Naive thymus-derived CD4-positive, alpha-beta T cell (primary cell): ENCODE measurements at regions of chr3 and their contacts with region 1.

Region 1: GRCh38 chr3:69051756-69052471 is at the start of gene TMF1:
- DNase-seq: peak; percentile 93 to 98 (median 98)
- ATAC-seq: peak; percentile 95
- H3K4me3 ChIP-seq: peak within 1 kb of the TSS; percentile 96
- H3K4me3 Mint-ChIP-seq: peak within 1 kb of the TSS; percentile 94 to 99 (median 96)
- H3K27ac ChIP-seq: peak within 1 kb of the TSS; percentile 87
- H3K27ac Mint-ChIP-seq: peak within 1 kb of the TSS; percentile 92 to 99 (median 98)
- H3K4me1 ChIP-seq: peaks cover 20 to 30% of the 10 kb centered on the region in 2 donors
- H3K4me1 Mint-ChIP-seq: peaks cover 20 to 59% (median 48%) of the 10 kb centered on the region in 7 donors
- H3K27me3 ChIP-seq: no peaks in the 10 kb centered on the region
- H3K27me3 Mint-ChIP-seq: peaks cover 0 to 2% (median 0%) of the 10 kb centered on the region in 5 donors
- total RNA-seq, gene TMF1: 41.3 to 71.8 (median 52.8) TPM

Region 2: DNA sequence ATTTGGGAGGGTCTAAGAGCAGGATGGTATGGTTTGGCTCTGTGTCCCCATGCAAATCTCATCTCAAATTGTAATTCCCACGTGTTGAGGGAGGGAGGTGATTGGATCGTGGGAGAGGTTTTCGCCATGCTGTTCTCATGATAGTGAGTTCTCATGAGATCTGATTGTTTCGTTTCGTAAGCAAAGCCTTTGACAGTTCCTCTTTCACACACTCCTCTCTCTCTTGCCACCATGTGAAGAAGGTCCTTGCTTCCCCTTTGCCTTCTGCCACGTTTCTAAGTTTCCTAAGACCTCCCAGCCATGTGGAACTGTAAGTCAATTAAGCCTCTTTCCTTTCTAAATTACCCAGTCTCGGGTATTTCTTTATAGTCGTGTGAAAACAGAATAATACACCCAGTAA is 673.3 kb before region 1 on chr3:
- CTCF ChIA-PET with region 1: no interaction called
- POLR2A ChIA-PET with region 1: no interaction called
- intact Hi-C with region 1: no loop called
- DNase-seq: no peak
- ATAC-seq: no peak
- H3K4me3 ChIP-seq: no peak overlapping the region
- H3K4me3 Mint-ChIP-seq: no peak overlapping the region
- H3K27ac ChIP-seq: no peak overlapping the region
- H3K27ac Mint-ChIP-seq: no peak overlapping the region
- H3K4me1 ChIP-seq: no peaks in the 10 kb centered on the region
- H3K4me1 Mint-ChIP-seq: peaks cover 0 to 8% (median 0%) of the 10 kb centered on the region in 7 donors
- H3K27me3 ChIP-seq: no peaks in the 10 kb centered on the region
- H3K27me3 Mint-ChIP-seq: no peaks in the 10 kb centered on the region

Region 3: GRCh38 chr3:68866157-68866556 is 185.8 kb before region 1 on chr3:
- CTCF ChIA-PET with region 1: no interaction called
- POLR2A ChIA-PET with region 1: no interaction called
- intact Hi-C with region 1: no loop called
- DNase-seq: no peak
- ATAC-seq: no peak
- H3K4me3 ChIP-seq: no peak overlapping the region
- H3K4me3 Mint-ChIP-seq: no peak overlapping the region
- H3K27ac ChIP-seq: no peak overlapping the region
- H3K27ac Mint-ChIP-seq: no peak overlapping the region
- H3K4me1 ChIP-seq: no peaks in the 10 kb centered on the region
- H3K4me1 Mint-ChIP-seq: no peaks in the 10 kb centered on the region
- H3K27me3 ChIP-seq: peaks cover 0 to 4% of the 10 kb centered on the region in 2 donors
- H3K27me3 Mint-ChIP-seq: peaks cover 14 to 64% (median 35%) of the 10 kb centered on the region in 5 donors

Region 4: DNA sequence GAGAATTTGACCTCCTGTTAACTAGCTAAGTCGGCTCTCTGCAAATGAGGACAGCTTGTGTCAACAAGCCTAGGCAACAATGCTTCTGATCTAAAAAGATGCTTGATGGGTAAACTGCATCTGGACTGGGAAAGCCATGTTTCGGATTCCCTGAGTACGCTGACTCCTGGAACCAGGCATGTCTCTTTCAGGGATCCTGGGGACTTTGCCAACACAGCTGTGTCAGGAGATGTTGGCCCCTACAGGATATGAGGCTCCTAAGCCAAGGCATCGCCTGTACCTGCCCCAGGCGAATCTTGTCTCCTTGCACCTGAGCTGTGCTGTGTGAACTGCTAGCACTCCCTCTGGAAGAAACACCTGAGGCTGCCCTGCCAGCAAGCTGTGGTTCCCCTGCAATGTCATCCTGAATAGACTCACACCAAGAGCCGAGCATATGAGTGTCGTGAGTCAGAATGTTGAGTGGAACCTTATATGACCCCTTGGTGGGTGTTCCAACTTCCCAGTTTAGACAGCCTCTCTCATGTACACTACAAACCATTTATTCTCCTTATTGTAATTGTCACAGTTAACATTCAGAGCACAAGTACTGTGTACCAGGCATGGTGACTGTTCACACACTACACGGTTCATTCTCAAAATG is 55.4 kb before region 1 on chr3:
- CTCF ChIA-PET with region 1: no interaction called
- POLR2A ChIA-PET with region 1: no interaction called
- intact Hi-C with region 1: no loop called
- DNase-seq: no peak
- ATAC-seq: no peak
- H3K4me3 ChIP-seq: no peak overlapping the region
- H3K4me3 Mint-ChIP-seq: no peak overlapping the region
- H3K27ac ChIP-seq: no peak overlapping the region
- H3K27ac Mint-ChIP-seq: peak overlapping the region in 1 of 9 donors; percentile 7
- H3K4me1 ChIP-seq: no peaks in the 10 kb centered on the region
- H3K4me1 Mint-ChIP-seq: peaks cover 0 to 6% (median 0%) of the 10 kb centered on the region in 7 donors
- H3K27me3 ChIP-seq: no peaks in the 10 kb centered on the region
- H3K27me3 Mint-ChIP-seq: no peaks in the 10 kb centered on the region

Region 5: DNA sequence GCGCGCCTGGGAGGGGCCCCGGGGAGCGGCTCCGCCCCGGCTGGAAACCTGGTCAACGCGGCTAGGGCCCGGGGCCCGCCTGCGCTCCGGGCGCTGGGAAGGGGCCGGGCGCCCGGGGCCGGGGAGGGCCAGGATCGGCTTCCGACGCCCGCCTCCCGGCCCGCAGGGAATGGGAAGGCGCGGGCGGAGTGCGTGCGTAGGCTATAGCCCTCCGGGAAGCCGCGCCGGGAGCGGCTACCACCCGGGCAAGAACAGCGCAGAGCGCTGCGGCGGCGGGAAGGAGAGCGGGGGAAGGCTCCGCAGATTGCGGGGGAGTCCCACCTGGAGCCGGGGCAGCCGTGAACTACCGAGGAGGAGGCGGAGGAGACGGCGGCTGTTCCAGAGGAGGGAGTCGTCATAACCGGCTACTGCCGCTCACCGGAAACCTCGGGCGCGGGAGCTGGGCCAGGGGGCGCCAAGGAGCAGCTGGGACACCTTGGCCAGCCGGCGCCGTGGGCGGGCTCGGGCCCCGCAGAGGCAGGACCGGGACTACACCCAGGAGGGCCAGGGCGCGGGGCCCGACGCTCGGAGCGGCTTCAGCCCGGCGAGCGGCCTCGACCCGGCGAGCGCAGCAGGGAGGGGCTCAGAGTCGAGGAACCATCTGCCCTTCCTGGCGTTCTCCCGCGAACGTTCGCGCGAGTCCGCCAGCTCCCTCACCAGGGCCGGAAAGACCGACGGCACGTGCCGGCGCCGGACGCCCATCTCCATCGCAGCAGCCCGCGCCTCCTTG is 38.5 kb before region 1 on chr3 and contains the start of gene EOGT:
- CTCF ChIA-PET with region 1: interaction called, 3 read pairs
- POLR2A ChIA-PET with region 1: interaction called, 4 read pairs
- intact Hi-C with region 1: loop called (anchors 1 kb)
- DNase-seq: peak; percentile 59 to 87 (median 66)
- ATAC-seq: peak; percentile 92
- H3K4me3 ChIP-seq: peak within 1 kb of the TSS; percentile 68
- H3K4me3 Mint-ChIP-seq: peak within 1 kb of the TSS; percentile 84 to 95 (median 93)
- H3K27ac ChIP-seq: peak within 1 kb of the TSS; percentile 78
- H3K27ac Mint-ChIP-seq: peak within 1 kb of the TSS; percentile 32 to 94 (median 82)
- H3K4me1 ChIP-seq: peaks cover 0 to 12% of the 10 kb centered on the region in 2 donors
- H3K4me1 Mint-ChIP-seq: peaks cover 10 to 49% (median 26%) of the 10 kb centered on the region in 7 donors
- H3K27me3 ChIP-seq: no peaks in the 10 kb centered on the region
- H3K27me3 Mint-ChIP-seq: no peaks in the 10 kb centered on the region
- total RNA-seq, gene EOGT: 10.1 to 19.1 (median 13.1) TPM

Region 6: GRCh38 chr3:69065318-69065964 is 13.5 kb after region 1 on chr3:
- CTCF ChIA-PET with region 1: interaction called, 3 read pairs
- POLR2A ChIA-PET with region 1: interaction called, 24 read pairs
- intact Hi-C with region 1: loop called in 1 of 2 experiments (anchors 1 kb)
- DNase-seq: peak in 5 of 9 donors; percentile 22 to 37 (median 27)
- ATAC-seq: peak; percentile 66
- H3K4me3 ChIP-seq: no peak overlapping the region
- H3K4me3 Mint-ChIP-seq: peak overlapping the region in 9 of 10 donors; percentile 11 to 81 (median 53)
- H3K27ac ChIP-seq: peak overlapping the region; percentile 5
- H3K27ac Mint-ChIP-seq: peak overlapping the region; percentile 57 to 91 (median 83)
- H3K4me1 ChIP-seq: peaks cover 22 to 25% of the 10 kb centered on the region in 2 donors
- H3K4me1 Mint-ChIP-seq: peaks cover 21 to 55% (median 42%) of the 10 kb centered on the region in 7 donors
- H3K27me3 ChIP-seq: no peaks in the 10 kb centered on the region
- H3K27me3 Mint-ChIP-seq: no peaks in the 10 kb centered on the region

Region 7: GRCh38 chr3:69092030-69092516 is 40.2 kb after region 1 on chr3:
- CTCF ChIA-PET with region 1: no interaction called
- POLR2A ChIA-PET with region 1: interaction called, 103 read pairs
- intact Hi-C with region 1: loop called (anchors 1 kb)
- DNase-seq: peak in 7 of 9 donors; percentile 46 to 67 (median 60)
- ATAC-seq: peak; percentile 77
- H3K4me3 ChIP-seq: peak overlapping the region; percentile 40
- H3K4me3 Mint-ChIP-seq: peak overlapping the region; percentile 70 to 94 (median 79)
- H3K27ac ChIP-seq: peak overlapping the region; percentile 76
- H3K27ac Mint-ChIP-seq: peak overlapping the region; percentile 90 to 98 (median 93)
- H3K4me1 ChIP-seq: peaks cover 77 to 83% of the 10 kb centered on the region in 2 donors
- H3K4me1 Mint-ChIP-seq: peaks cover 62 to 93% (median 85%) of the 10 kb centered on the region in 7 donors
- H3K27me3 ChIP-seq: no peaks in the 10 kb centered on the region
- H3K27me3 Mint-ChIP-seq: no peaks in the 10 kb centered on the region

Region 8: GRCh38 chr3:69200384-69201068 is 148.6 kb after region 1 on chr3:
- CTCF ChIA-PET with region 1: no interaction called
- POLR2A ChIA-PET with region 1: no interaction called
- intact Hi-C with region 1: loop called in 1 of 2 experiments (anchors 2 kb)
- DNase-seq: peak in 2 of 9 donors; percentile 6 to 51
- ATAC-seq: no peak
- H3K4me3 ChIP-seq: peak overlapping the region; percentile 70
- H3K4me3 Mint-ChIP-seq: peak overlapping the region; percentile 70 to 91 (median 86)
- H3K27ac ChIP-seq: no peak overlapping the region
- H3K27ac Mint-ChIP-seq: peak overlapping the region; percentile 7 to 93 (median 86)
- H3K4me1 ChIP-seq: peaks cover 14 to 22% of the 10 kb centered on the region in 2 donors
- H3K4me1 Mint-ChIP-seq: peaks cover 13 to 71% (median 43%) of the 10 kb centered on the region in 7 donors
- H3K27me3 ChIP-seq: no peaks in the 10 kb centered on the region
- H3K27me3 Mint-ChIP-seq: no peaks in the 10 kb centered on the region